Activated naive CD4-positive, alpha-beta T cell treated with anti-CD3 and anti-CD28 coated beads for 36 hours (primary cell): ENCODE measurements at regions of chr20 and their contacts with region 1.

Region 1: GRCh38 chr20:53708129-53708968 is 114.7 kb upstream of the ZNF217 start:
- DNase-seq: peak; percentile 58
- H3K4me3 Mint-ChIP-seq: peak overlapping the region; percentile 64
- H3K27ac Mint-ChIP-seq: peak overlapping the region; percentile 90
- H3K4me1 Mint-ChIP-seq: peaks cover 53% of the 10 kb centered on the region
- H3K27me3 Mint-ChIP-seq: no peaks in the 10 kb centered on the region

Region 2: DNA sequence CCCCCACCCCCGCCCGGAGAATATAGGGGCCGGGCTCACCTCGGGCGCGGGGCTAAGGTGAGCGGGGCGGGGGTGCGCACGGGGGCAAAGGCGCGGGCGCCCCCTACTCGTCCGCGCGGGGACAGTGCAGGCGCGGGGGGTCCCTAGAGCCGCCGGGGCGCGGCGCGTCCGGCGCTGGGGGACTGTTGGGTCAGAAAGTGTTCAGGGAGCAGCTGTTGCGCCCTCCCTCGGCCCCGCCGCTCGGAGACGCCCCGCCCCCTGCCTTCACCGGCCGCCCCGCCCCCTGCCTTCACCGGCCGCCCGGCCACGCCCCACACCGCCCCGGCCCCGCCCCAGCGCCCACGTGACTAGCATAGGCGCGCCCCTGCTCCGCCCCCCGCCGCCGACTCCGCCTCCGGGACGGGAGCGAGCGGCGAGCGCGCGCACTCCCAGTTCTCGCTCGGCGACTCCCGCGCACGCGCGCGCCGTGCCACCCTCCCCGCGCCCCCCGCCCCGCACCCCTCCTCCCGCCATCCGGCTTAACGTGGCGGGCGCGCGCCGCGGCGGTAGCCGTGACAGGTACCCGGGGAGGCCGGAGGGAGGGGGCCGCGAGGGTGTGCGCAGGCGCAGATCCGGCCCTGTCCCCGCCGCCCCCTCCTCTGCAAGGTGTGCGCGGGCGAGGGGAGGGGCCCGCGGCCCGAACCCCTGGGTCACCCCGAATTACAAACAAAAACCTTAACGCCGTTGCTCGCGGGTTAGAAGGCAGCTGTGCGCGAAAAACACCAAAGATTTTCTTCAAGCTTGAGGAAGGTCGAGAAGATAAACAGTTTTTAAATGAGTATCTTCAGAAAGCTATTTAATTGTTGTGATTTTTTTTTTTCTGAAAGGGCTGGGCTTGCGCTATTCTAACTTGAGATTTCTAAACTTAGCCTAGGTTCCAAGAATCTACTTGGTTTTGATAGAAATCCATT is 114.0 kb before region 1 on chr20:
- CTCF ChIA-PET with region 1: no interaction called
- intact Hi-C with region 1: loop called (anchors 5 kb)
- DNase-seq: peak; percentile 96
- H3K4me3 Mint-ChIP-seq: peak overlapping the region; percentile 94
- H3K27ac Mint-ChIP-seq: peak overlapping the region; percentile 99
- H3K4me1 Mint-ChIP-seq: peaks cover 51% of the 10 kb centered on the region
- H3K27me3 Mint-ChIP-seq: no peaks in the 10 kb centered on the region

Region 3: GRCh38 chr20:53652090-53652858 is 56.1 kb before region 1 on chr20:
- CTCF ChIA-PET with region 1: no interaction called
- intact Hi-C with region 1: loop called (anchors 2 kb)
- DNase-seq: peak; percentile 26
- H3K4me3 Mint-ChIP-seq: peak overlapping the region; percentile 65
- H3K27ac Mint-ChIP-seq: peak overlapping the region; percentile 93
- H3K4me1 Mint-ChIP-seq: peaks cover 43% of the 10 kb centered on the region
- H3K27me3 Mint-ChIP-seq: no peaks in the 10 kb centered on the region

Region 4: GRCh38 chr20:53718142-53719021 is 10.0 kb after region 1 on chr20:
- CTCF ChIA-PET with region 1: interaction called, 7 read pairs
- intact Hi-C with region 1: loop called (anchors 1 kb)
- DNase-seq: no peak
- H3K4me3 Mint-ChIP-seq: no peak overlapping the region
- H3K27ac Mint-ChIP-seq: no peak overlapping the region
- H3K4me1 Mint-ChIP-seq: peaks cover 17% of the 10 kb centered on the region
- H3K27me3 Mint-ChIP-seq: no peaks in the 10 kb centered on the region

Region 5: DNA sequence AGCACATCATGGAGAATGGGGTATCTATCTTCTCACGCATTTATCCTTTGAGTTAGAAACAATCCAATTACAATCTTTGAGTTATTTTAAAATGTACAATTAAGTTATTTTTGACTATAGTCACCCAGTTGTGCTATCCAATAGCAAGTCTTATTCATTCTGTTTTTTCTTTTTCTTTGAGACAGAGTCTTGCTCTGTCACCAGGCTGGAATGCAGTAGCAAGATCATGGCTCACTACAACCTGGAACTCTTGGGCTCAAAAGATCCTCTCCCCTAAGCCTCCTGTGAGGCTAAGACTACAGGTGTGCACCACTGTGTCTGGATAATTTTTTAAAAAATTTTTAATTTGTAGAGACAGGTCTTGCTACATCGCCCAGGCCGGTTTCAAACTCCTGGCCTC is 86.8 kb after region 1 on chr20:
- CTCF ChIA-PET with region 1: no interaction called
- intact Hi-C with region 1: no loop called
- DNase-seq: no peak
- H3K4me3 Mint-ChIP-seq: no peak overlapping the region
- H3K27ac Mint-ChIP-seq: no peak overlapping the region
- H3K4me1 Mint-ChIP-seq: peaks cover 6% of the 10 kb centered on the region
- H3K27me3 Mint-ChIP-seq: no peaks in the 10 kb centered on the region

Region 6: GRCh38 chr20:53839423-53840176 is 131.3 kb after region 1 on chr20:
- CTCF ChIA-PET with region 1: no interaction called
- intact Hi-C with region 1: loop called (anchors 2 kb)
- DNase-seq: peak; percentile 65
- H3K4me3 Mint-ChIP-seq: peak overlapping the region; percentile 51
- H3K27ac Mint-ChIP-seq: peak overlapping the region; percentile 78
- H3K4me1 Mint-ChIP-seq: peaks cover 73% of the 10 kb centered on the region
- H3K27me3 Mint-ChIP-seq: no peaks in the 10 kb centered on the region